Breast epithelium (tissue), 4 donors: ENCODE measurements at regions of chr11 and their contacts with region 1.

Region 1: DNA sequence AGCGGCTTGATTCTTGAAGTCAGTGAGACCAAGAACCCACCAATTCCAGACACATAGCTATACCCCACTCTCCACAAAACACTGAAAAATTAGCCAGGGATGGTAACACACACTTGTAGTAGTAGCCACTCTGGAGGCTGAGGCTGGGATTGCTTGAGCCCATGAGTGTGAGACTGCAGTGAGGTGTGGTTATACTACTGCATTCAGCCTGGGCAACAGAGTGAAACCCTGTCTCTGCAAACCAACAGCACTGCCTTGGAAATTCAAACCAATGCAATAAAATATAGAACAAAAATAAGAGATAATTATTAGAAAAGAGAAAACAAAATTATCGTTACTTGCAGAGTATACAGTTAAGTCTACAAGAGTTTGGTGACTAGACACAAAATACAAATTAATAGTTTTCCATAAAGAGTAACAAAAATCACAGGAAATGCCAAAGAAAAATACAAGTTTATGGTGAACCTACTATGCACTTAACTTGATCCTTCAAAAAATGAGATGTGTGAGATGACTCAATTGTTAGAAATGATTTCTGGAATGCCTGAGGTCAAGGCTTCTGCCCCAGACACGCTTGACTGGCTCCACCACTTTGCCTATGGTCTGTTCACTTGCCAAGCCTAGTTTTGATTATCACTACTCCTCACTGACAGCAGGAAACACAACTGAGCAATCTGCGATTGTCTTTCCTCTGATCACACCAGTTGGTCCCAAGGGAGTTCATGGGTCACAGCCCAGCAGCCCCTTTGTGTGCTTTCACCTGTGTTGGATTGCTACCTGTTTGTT is 20.4 kb upstream of the PRDM10 start:
- DNase-seq: no peak
- H3K4me3 ChIP-seq: no peak overlapping the region
- H3K27ac ChIP-seq: peak overlapping the region in 1 of 2 donors; percentile 43
- H3K4me1 ChIP-seq: no peaks in the 10 kb centered on the region
- H3K27me3 ChIP-seq: no peaks in the 10 kb centered on the region
- CTCF ChIP-seq: no peak
- POLR2A ChIP-seq: no peak

Region 2: DNA sequence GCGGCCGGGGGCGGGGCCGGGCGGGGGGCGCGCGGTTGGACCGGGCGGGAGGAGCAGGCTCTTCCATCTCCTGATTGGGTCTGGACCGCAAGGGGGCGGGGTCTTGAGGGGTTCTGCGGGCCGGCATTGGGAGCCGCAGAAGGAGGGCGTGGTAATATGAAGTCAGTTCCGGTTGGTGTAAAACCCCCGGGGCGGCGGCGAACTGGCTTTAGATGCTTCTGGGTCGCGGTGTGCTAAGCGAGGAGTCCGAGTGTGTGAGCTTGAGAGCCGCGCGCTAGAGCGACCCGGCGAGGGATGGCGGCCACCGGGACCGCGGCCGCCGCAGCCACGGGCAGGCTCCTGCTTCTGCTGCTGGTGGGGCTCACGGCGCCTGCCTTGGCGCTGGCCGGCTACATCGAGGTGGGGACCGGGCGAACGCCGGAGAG is 46.7 kb after region 1 on chr11 and contains the start of gene APLP2:
- intact Hi-C with region 1: loop called (anchors 10 kb)
- DNase-seq: peak; percentile 99 to 100
- H3K4me3 ChIP-seq: peak within 1 kb of the TSS; percentile 82 to 97 (median 89)
- H3K27ac ChIP-seq: peak within 1 kb of the TSS; percentile 94 to 96
- H3K4me1 ChIP-seq: peaks cover 0 to 17% of the 10 kb centered on the region in 2 donors
- H3K27me3 ChIP-seq: no peaks in the 10 kb centered on the region
- CTCF ChIP-seq: no peak
- POLR2A ChIP-seq: peak; percentile 70
- total RNA-seq, gene APLP2: 305 to 560 (median 418) TPM

Region 3: GRCh38 chr11:130340671-130341319 is 317.8 kb after region 1 on chr11:
- intact Hi-C with region 1: no loop called
- DNase-seq: no peak
- H3K4me3 ChIP-seq: no peak overlapping the region
- H3K27ac ChIP-seq: no peak overlapping the region
- H3K4me1 ChIP-seq: no peaks in the 10 kb centered on the region
- H3K27me3 ChIP-seq: no peaks in the 10 kb centered on the region
- CTCF ChIP-seq: no peak
- POLR2A ChIP-seq: no peak